Lower leg skin (tissue), 4 donors: ENCODE measurements at regions of chr22 and their contacts with region 1.

Region 1: GRCh38 chr22:29072193-29072978 is 449 bp upstream of the KREMEN1 start:
- DNase-seq: peak; percentile 87 to 97
- H3K4me3 ChIP-seq: no peak overlapping the region
- CTCF ChIP-seq: no peak
- POLR2A ChIP-seq: no peak

Region 2: DNA sequence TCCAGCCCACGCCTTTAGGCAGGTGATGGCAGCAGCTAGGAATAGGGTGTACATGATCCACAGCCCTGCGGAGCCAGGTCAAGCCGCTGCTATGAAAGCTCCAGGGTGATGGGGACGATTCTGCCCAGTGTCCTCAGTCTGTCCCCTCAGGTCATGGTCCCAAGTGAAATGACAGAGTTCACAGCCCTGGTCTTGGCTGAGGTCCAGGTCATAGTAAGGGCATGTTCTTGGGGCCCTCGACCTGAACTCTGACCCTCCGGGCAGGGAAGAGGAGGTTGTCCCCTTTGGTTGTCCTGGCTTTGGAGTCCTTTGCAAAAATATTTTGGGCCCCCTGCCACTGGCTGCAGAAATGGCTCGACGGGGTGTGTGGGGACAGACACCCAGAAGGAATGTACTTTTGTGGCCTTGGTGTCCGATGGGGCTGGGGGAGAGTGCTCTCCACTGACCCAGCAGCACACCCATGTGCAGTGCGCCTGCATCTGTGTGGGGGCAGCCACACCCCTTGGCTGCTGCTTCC is 18.1 kb before region 1 on chr22:
- intact Hi-C with region 1: loop called (anchors 1 kb)
- DNase-seq: no peak
- H3K4me3 ChIP-seq: no peak overlapping the region
- CTCF ChIP-seq: no peak
- POLR2A ChIP-seq: no peak